Activated B cell treated with CpG ODN at 0.5 μM for 24 hours (primary cell): ENCODE measurements at regions of chr17 and their contacts with region 1.

Region 1: GRCh38 chr17:42019509-42020404 is at the start of gene NKIRAS2:
- DNase-seq: peak; percentile 91
- ATAC-seq: peak; percentile 77
- H3K4me3 Mint-ChIP-seq: peak within 1 kb of the TSS; percentile 100
- H3K27ac Mint-ChIP-seq: peak within 1 kb of the TSS; percentile 82
- H3K4me1 Mint-ChIP-seq: peaks cover 70% of the 10 kb centered on the region
- H3K27me3 Mint-ChIP-seq: no peaks in the 10 kb centered on the region
- CTCF ChIP-seq: no peak
- total RNA-seq, gene NKIRAS2: 23.9 and 25.8 TPM in 2 replicates

Region 2: DNA sequence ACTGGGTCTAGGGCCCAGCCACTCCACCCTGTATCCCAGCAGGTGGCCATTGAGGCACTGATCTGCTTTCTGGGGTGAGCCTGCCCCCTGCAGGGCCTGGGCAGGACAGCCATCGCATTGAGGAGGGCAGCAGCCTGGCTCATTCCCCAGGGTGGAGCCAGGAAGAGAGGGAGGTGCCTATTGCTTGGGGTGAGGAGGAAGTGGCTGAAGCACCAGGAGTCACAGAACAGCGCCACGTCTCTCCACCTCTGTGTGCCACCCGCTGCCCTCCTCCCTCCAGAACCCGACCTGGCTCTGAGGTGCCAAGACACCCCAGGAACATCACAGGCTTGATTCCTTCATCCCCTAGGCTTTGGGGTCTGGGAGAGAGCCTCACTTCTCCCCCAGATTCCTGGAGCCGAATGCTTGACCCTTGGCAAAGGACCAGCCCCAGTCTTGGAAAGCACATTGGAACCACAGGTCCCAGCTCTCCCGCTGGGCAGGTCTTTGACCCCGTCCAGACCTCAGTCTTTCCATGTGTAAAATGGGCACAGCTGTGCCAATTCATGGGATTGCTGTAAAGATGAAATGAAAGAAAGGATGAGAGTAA is 522.8 kb before region 1 on chr17:
- CTCF ChIA-PET with region 1: no interaction called
- POLR2A ChIA-PET with region 1: no interaction called
- intact Hi-C with region 1: no loop called
- DNase-seq: no peak
- ATAC-seq: peak; percentile 66
- H3K4me3 Mint-ChIP-seq: no peak overlapping the region
- H3K27ac Mint-ChIP-seq: no peak overlapping the region
- H3K4me1 Mint-ChIP-seq: no peaks in the 10 kb centered on the region
- H3K27me3 Mint-ChIP-seq: peaks cover 8% of the 10 kb centered on the region
- CTCF ChIP-seq: no peak

Region 3: DNA sequence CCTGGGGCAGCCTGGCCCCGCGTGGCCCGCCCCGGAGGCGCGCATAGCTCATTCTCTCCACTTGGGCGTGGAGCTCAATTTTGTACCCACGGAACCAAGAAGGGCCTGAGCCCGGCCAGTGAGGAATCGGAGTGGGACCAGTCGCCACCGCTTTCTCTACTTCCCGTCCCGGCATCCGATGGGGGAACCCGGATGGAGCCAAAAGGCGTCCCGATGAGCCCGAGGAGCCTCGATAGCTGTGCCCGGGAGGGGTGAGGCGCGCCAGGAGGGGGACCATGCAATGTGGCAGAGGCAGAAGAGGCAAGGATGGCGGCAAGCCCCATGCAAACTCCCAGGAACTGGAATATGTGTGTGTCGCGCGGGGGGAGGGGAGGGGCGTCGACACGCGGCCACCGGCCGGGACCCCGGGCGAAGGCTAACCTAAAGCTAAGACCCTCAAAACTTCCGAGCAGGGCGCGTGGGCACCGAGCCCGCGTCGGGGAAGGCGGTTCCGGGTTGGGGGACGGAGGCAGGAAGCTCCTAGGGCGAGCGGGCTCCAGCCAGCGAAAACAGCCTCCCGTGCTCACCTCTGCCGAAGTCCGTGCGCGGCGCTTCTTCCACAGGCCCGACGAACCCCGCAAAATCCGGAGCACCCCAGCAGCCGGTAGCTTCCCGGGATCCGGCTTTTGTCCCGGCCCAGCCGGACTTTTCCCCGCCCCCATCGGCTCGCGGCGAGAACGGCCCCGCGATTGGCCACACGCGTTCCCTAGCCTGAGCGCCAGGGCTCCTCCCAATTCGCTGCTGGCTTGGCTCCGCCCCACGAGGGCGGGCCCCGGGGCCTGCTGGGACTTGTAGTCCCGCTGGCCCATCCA is 101.2 kb before region 1 on chr17 and contains the start of gene ACLY:
- CTCF ChIA-PET with region 1: interaction called, 4 read pairs
- POLR2A ChIA-PET with region 1: interaction called, 15 read pairs
- intact Hi-C with region 1: loop called (anchors 2 kb)
- DNase-seq: peak; percentile 96
- ATAC-seq: peak; percentile 99
- H3K4me3 Mint-ChIP-seq: peak within 1 kb of the TSS; percentile 92
- H3K27ac Mint-ChIP-seq: peak within 1 kb of the TSS; percentile 84
- H3K4me1 Mint-ChIP-seq: peaks cover 31% of the 10 kb centered on the region
- H3K27me3 Mint-ChIP-seq: no peaks in the 10 kb centered on the region
- CTCF ChIP-seq: no peak
- total RNA-seq, gene ACLY: 133 and 143 TPM in 2 replicates

Region 4: GRCh38 chr17:41972571-41973411 is 47.0 kb before region 1 on chr17:
- CTCF ChIA-PET with region 1: interaction called, 3 read pairs
- POLR2A ChIA-PET with region 1: interaction called, 12 read pairs
- intact Hi-C with region 1: no loop called
- DNase-seq: peak; percentile 30
- ATAC-seq: peak; percentile 87
- H3K4me3 Mint-ChIP-seq: peak overlapping the region; percentile 25
- H3K27ac Mint-ChIP-seq: peak overlapping the region; percentile 56
- H3K4me1 Mint-ChIP-seq: peaks cover 61% of the 10 kb centered on the region
- H3K27me3 Mint-ChIP-seq: no peaks in the 10 kb centered on the region
- CTCF ChIP-seq: no peak

Region 5: DNA sequence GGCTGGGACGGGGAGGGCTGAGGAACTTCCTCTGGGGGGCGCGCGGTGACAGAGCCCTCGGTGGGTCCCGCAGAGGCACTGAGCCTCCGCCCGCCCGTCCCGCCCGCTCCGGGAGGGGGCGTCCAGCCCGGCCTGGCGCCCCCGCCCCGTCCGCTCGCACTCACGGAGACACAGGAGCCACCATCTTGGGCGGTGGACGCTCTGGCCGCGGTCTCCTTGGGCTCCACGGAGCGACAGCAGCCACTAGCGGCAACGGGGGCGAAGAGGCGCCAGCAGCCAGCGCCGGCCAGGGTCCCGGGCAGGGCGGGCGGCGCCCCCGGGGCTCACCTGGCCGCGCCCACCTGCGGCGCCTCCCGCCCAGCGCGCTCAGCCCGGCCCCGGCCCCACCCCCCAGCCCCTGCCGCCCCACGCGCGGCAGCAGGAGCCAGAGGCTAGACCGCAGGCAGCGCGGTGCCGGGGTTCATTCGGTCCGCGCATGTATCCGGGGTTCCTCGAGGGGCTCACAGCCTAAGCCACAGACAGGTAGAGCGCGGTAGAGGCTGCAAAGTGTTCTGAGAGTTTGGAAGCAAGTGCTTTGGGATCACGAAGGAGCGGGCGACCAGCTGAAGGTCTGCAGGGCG is 30.7 kb after region 1 on chr17 and contains the start of gene C17orf113:
- CTCF ChIA-PET with region 1: interaction called, 3 read pairs
- POLR2A ChIA-PET with region 1: interaction called, 3 read pairs
- intact Hi-C with region 1: loop called (anchors 2 kb)
- DNase-seq: peak; percentile 52
- ATAC-seq: peak; percentile 87
- H3K4me3 Mint-ChIP-seq: peak within 1 kb of the TSS; percentile 82
- H3K27ac Mint-ChIP-seq: no peak within 1 kb of the TSS
- H3K4me1 Mint-ChIP-seq: peaks cover 9% of the 10 kb centered on the region
- H3K27me3 Mint-ChIP-seq: peaks cover 30% of the 10 kb centered on the region
- CTCF ChIP-seq: no peak
- total RNA-seq, gene C17orf113: 3.1 and 4.5 TPM in 2 replicates

Region 6: DNA sequence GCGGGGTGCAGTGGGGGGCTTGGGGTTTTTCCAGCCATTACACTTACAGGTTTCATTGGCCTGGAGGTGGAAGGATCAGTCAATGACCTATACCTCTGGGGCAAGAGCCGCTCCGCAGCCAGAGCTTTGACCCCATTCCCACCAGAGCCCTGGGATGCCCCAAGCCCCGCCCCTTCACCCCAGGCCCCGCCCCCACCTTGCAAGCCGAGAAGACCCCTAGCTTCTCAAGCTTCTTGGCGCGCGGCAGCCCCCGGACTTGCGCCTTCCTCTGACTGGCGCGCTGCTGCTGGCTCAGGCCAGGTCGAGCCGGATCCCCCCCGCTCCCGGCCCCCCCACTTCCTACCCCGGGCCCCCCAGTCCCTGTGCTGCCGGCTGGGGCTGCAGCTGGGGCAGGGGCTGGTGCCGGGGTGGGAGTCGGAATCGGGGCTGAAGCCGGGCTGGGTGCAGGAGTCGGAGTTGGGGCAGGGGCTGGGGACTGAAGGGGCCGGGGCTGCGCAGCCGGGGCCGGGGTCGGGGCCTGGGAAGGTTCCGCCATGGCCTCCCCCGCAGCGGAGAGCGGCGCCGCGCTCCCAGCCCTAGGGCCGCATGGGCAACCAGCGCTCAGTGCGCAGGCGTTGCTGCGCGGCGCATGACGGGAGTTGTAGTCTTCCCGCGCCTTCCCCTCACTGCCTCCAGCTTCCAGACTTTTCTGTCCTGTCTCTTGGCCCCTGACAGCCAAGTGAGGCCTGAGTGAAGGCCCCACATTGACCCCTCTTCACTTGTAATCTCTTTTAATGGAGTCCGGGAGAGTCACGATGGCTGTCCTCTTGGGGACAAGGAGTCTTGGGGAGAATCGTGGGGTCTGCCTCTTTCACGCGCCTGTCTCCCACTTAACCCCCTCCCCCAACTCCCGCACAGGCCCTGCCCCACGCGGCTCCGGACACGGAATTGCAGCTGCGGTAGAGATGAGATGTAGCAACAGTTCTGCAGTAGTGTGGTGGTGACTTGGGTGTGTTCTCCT is 101.3 kb after region 1 on chr17 and contains the start of gene KAT2A:
- CTCF ChIA-PET with region 1: interaction called, 10 read pairs
- POLR2A ChIA-PET with region 1: interaction called, 46 read pairs
- intact Hi-C with region 1: loop called (anchors 2 kb)
- DNase-seq: peak; percentile 76
- ATAC-seq: peak; percentile 89
- H3K4me3 Mint-ChIP-seq: peak within 1 kb of the TSS; percentile 71
- H3K27ac Mint-ChIP-seq: peak within 1 kb of the TSS; percentile 30
- H3K4me1 Mint-ChIP-seq: peaks cover 32% of the 10 kb centered on the region
- H3K27me3 Mint-ChIP-seq: no peaks in the 10 kb centered on the region
- CTCF ChIP-seq: no peak
- total RNA-seq, gene KAT2A: 33.4 and 40.1 TPM in 2 replicates

Region 7: GRCh38 chr17:42183741-42184711 is 164.3 kb after region 1 on chr17:
- CTCF ChIA-PET with region 1: interaction called, 4 read pairs
- POLR2A ChIA-PET with region 1: interaction called, 9 read pairs
- intact Hi-C with region 1: loop called (anchors 2 kb)
- DNase-seq: peak; percentile 87
- ATAC-seq: peak; percentile 64
- H3K4me3 Mint-ChIP-seq: peak overlapping the region; percentile 93
- H3K27ac Mint-ChIP-seq: peak overlapping the region; percentile 95
- H3K4me1 Mint-ChIP-seq: peaks cover 56% of the 10 kb centered on the region
- H3K27me3 Mint-ChIP-seq: no peaks in the 10 kb centered on the region
- CTCF ChIP-seq: peak; percentile 33